Adrenal gland (tissue), 19 donors: ENCODE measurements at regions of chr5 and their contacts with region 1.

Region 1: GRCh38 chr5:147369742-147370374 is 135.0 kb downstream of the STK32A start:
- DNase-seq: no peak
- H3K4me3 ChIP-seq: no peak overlapping the region
- H3K27ac ChIP-seq: no peak overlapping the region
- H3K4me1 ChIP-seq: no peaks in the 10 kb centered on the region
- H3K27me3 ChIP-seq: no peaks in the 10 kb centered on the region
- CTCF ChIP-seq: peak; percentile 38 to 86 (median 76)
- POLR2A ChIP-seq: no peak

Region 2: GRCh38 chr5:147234825-147235635 is 134.8 kb before region 1 on chr5 and contains the start of gene STK32A:
- intact Hi-C with region 1: loop called in 1 of 2 experiments (anchors 5 kb)
- DNase-seq: peak; percentile 83 to 89 (median 84)
- H3K4me3 ChIP-seq: peak within 1 kb of the TSS in 3 of 4 donors; percentile 37 to 63 (median 40)
- H3K27ac ChIP-seq: peak within 1 kb of the TSS in 4 of 5 donors; percentile 36 to 84 (median 76)
- H3K4me1 ChIP-seq: peaks cover 0 to 8% of the 10 kb centered on the region in 2 donors
- H3K27me3 ChIP-seq: no peaks in the 10 kb centered on the region
- CTCF ChIP-seq: peak in 1 of 6 experiments; percentile 16
- POLR2A ChIP-seq: peak; percentile 62 to 79
- total RNA-seq, gene STK32A: 1.8 to 46.0 (median 20.1) TPM

Region 3: DNA sequence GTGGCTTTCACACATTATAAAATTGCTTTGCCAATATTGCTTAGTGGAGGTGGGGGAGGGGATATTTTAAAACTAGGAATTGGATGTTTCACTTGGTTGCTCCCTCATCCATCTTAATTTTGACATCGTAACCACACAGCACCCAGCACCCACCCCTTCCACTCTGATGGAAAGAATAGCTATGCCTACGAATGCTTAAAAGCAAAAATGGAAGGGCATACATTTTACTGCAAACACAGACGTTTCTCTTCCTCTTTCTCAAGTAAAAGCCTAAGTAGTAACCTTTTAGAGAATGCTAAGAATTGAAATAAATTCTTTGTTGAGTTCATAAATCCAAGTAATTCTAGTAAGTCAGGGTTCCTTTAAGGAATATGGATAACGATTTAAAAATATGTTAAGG is 342.7 kb after region 1 on chr5:
- intact Hi-C with region 1: no loop called
- DNase-seq: no peak
- H3K4me3 ChIP-seq: no peak overlapping the region
- H3K27ac ChIP-seq: no peak overlapping the region
- H3K4me1 ChIP-seq: no peaks in the 10 kb centered on the region
- H3K27me3 ChIP-seq: no peaks in the 10 kb centered on the region
- CTCF ChIP-seq: no peak
- POLR2A ChIP-seq: no peak